Right ventricle myocardium inferior (tissue), 1 donor: ENCODE measurements at regions of chr3 and their contacts with region 1.

Region 1: GRCh38 chr3:120558771-120559241 is 37.3 kb upstream of the NDUFB4 start:
- DNase-seq: peak; percentile 97
- ATAC-seq: peak; percentile 58

Region 2: DNA sequence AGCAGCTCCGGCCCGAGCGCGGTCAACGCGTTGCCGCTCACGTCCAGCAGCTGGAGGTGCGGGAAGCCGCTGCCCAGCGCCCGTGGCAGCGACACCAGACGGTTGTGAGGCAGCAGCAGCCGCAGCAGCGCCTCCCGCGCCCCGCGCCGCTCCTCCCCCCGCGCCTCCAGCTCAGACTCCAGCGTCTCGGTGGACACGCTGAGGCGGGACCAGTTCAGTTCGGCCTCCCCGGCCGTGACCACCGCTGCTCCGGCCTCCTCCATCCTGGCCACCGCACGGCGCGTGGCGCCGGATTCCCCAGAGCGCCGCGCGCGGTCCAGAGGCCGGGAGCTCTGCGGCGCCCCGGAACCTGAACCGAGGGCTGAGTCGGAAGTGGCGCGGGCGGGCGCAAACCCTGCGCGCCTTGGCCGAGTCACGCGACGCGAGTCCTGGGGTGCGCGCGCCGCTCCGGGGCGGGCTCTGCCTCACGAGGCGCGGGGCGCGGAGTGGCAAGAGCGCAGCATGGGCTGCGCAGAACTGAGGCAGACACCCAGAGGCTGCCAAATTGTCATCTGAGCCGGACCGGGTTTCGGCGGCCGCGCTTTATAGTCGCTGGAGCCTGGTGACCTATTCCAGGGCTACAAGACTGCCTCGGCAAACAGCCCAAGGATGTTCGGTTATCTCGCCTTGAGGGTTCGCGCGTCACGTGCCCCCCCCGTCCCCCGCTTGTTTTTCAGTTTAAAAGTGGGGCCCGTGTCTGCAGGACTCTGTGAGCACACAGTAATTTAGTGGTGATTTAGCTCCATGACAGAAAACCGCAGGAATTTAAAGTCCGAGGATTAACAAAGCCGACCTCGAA is 209.6 kb before region 1 on chr3 and contains the start of gene LRRC58:
- intact Hi-C with region 1: loop called (anchors 2 kb)
- DNase-seq: peak; percentile 97
- ATAC-seq: peak; percentile 98
- total RNA-seq, gene LRRC58: 8.7 TPM

Region 3: DNA sequence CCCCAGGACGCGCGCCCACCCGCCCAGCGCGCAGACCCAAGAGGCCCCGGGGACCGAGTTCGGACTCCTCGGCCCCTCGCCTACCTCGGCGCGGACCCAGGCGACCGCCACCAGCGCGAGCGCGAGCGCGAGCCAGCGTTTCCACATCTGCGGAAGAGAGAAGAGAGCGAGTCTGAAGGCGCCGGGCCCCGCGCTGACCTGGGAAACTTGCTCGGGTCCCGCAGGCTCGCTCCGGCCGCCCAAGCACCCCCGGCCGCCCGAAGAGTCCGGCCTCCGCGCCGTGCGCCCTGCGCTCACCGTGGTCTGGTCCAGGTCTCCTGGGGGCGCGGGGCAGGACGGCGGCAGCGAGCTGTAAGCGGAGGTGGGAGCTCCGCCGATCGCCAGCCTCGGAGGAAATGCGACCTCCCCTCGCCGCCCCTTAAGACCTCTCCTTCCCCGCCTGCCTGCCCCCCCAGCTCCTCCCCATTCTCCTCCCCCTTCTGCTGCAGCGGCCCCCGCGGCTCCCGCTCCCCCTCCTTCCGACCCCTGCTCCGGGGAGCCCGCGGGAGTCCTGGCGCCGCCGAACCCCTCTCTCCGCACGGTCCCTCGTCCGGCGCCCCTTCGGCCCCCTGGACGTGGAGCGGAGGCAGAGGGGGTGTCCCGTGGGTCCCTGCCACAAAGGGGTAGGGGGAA is 108.1 kb before region 1 on chr3 and contains the start of gene FSTL1:
- intact Hi-C with region 1: loop called (anchors 1 kb)
- DNase-seq: peak; percentile 84
- ATAC-seq: peak; percentile 85
- total RNA-seq, gene FSTL1: 217 TPM

Region 4: GRCh38 chr3:120506828-120507774 is 51.7 kb before region 1 on chr3:
- intact Hi-C with region 1: loop called (anchors 5 kb)
- DNase-seq: no peak
- ATAC-seq: peak; percentile 50

Region 5: DNA sequence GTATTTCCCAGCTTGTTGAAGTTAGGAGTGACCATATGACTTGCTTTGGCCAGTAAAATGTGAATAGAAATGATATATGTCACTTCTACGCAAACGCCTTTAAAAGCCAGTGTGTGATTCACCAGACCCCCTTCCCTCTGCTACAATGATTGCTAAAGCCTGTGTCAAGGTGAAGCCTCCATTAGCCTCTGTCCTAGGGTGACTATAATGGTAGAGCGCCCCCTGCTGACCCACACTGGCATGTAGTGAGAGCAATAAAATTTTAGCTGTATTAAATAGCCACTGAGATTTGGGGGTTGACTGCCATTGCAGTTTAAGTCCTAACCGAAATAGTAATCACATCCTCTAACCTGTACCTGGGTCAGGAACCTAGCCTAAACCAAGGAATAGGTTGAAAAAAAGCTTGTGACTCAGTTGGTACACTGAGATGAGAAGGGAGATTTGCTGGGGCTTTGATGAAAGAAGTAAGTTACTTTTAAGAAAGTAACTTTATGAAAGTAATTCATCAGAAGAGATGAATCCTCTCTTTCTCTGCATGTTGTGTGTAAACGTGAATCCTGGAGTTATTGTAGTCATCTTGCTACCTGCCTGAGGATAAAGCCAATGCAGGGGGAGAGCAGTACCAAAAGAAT is 236.3 kb after region 1 on chr3:
- intact Hi-C with region 1: loop called (anchors 1 kb)
- DNase-seq: peak; percentile 82
- ATAC-seq: peak; percentile 86